Activated CD4-positive, alpha-beta memory T cell treated with anti-CD3 and anti-CD28 coated beads for 36 hours (primary cell): ENCODE measurements at regions of chr1 and their contacts with region 1.

Region 1: GRCh38 chr1:145891587-145892485 is 6.2 kb upstream of the ANKRD35 start:
- DNase-seq: peak; percentile 74
- H3K4me3 Mint-ChIP-seq: no peak overlapping the region
- H3K27ac Mint-ChIP-seq: no peak overlapping the region
- H3K4me1 Mint-ChIP-seq: peaks cover 1% of the 10 kb centered on the region
- H3K27me3 Mint-ChIP-seq: no peaks in the 10 kb centered on the region

Region 2: GRCh38 chr1:145906954-145907753 is 15.3 kb after region 1 on chr1:
- CTCF ChIA-PET with region 1: interaction called, 34 read pairs
- POLR2A ChIA-PET with region 1: no interaction called
- intact Hi-C with region 1: no loop called
- DNase-seq: no peak
- H3K4me3 Mint-ChIP-seq: no peak overlapping the region
- H3K27ac Mint-ChIP-seq: no peak overlapping the region
- H3K4me1 Mint-ChIP-seq: peaks cover 2% of the 10 kb centered on the region
- H3K27me3 Mint-ChIP-seq: no peaks in the 10 kb centered on the region

Region 3: DNA sequence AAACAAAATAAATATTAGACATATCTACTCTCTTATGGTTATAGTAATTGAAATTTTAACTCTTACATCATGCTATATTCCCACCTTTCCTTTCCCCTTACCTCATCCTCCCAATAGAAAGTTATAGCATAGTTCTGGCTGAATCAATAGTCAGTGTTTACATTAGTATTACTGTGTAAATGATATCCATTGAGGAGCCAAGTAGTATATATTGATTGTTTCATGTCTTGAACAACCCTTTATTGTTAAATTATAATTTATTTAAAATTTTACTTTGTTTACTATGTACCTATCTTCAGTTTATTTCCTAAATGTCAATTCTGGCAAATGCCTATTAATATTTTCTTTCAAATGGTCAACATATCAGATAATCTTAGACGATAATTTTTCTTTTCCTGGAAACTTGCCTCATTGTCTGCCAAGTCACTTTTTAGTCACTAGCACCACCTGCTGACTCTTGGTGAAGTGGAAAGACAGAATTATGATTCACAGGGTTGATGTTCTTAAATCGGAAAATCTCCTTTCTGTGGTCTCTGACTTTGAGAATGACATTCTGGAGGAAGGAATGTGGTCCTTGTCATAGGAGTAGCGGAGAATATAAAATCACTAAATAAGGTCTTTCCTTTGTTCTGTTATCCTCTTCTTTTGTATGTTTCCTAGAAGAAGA is 121.0 kb after region 1 on chr1:
- CTCF ChIA-PET with region 1: interaction called, 17 read pairs
- POLR2A ChIA-PET with region 1: no interaction called
- intact Hi-C with region 1: loop called (anchors 1 kb)
- DNase-seq: peak; percentile 63
- H3K4me3 Mint-ChIP-seq: no peak overlapping the region
- H3K27ac Mint-ChIP-seq: no peak overlapping the region
- H3K4me1 Mint-ChIP-seq: peaks cover 10% of the 10 kb centered on the region
- H3K27me3 Mint-ChIP-seq: peaks cover 4% of the 10 kb centered on the region